ENCODE measurements at regions of chr16 and their contacts with region 1.

Region 1: DNA sequence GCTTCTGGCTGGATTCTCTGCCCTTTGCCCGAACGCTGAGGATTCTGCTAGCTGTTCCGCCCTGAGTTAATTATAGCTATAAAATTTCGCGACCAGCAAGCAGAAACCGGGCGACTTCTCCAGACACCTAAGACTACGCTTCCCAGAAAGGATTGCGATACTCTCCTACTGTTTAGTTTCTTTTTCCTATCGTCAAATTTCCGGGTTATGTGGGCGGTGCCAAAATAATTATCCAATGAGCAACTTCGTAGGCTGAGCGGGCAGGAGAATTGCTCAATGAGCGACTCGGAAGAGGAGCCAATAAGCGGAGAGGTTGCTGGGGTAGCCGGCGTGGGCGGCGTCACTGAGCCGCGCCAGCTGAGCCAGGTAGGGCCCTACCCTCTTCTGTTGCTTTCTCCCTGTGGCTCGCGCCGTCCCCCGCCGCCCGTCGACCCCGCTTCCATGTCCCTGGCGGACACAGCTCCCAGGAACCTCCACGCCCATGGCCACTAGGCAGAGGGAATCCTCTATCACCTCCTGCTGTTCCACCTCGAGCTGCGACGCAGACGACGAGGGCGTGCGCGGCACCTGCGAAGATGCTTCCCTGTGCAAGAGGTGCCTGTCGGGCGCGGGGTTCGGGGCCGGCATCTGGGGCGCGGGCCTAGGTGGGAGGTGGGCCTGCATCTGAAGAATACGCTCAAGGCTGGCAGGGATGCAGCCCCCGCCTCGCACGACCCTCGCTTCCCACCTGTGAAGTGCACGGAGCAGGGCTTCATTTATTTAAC is at the start of gene LCMT1:
- DNase-seq: peak; percentile 95
- total RNA-seq, gene LCMT1: 38.7 TPM

Region 2: DNA sequence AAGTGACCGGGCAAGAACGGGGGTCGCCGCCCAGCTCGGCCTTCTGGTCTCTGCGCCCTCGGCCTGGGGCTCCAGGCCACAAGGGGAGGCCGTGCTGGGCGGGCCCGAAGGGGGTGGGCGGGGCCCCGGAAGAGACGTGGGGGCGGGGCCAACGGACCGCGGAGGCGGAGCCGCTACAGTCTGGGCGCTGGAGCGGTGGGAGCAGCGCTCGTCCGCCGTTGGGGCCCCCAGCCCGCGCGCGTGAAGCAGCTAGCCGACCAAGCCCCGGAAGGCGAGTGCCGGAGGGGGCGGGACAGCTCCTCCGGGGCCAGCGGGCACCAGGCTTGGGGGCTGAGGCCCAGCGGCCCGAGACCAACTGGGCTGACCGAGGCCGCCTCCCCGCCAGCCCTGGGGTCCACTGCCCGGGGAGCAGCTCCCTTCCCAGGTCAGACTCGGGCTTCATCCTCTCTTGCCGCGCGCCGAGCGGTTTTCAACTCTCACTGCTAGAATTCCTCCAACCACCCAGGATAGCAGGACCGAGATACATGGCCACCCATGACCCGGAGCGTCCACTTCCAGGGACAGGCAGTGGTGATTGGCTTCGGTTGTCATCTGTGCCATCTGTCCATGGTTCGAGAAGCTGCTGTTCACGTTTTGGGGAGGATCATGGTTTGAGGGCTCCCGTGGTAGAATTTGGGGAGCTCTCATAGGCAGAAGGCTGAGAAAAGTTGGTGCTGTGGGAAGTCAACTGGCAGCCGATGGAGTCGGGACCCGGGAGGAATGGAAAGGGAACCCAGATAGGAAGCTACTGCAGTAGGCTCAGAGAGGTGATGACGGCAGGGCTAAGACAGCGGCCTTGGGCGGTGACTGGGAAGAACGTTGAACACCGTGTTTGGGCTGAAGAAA is 44.6 kb before region 1 on chr16:
- intact Hi-C with region 1: loop called (anchors 2 kb)
- DNase-seq: peak; percentile 95

Region 3: GRCh38 chr16:25198021-25198420 is 86.4 kb after region 1 on chr16:
- intact Hi-C with region 1: no loop called
- DNase-seq: no peak

Region 4: DNA sequence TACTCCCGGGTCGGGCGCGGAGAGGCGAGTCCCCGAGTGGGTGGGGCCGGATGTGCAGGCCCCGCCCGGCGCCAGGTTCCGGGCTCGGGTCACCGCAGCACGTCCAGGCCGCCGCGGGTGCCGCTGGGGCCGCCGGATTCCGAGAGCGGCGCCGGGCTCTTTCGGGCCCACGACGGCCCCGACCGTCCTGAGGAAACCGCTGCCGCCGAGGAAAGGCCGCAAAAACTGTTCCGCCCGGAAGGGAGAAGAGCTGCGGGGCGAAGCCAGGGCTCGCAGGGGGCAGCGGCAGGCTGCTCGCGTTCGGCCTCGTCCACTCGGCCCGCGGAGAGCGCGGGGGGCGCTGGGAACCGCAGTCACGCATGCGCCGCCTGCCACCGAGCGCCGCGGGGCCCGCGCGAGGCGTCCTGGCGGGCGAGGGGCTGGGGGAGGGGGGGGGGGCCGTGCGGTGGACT is 145.9 kb after region 1 on chr16 and contains the start of gene ZKSCAN2:
- intact Hi-C with region 1: loop called (anchors 5 kb)
- DNase-seq: peak; percentile 96
- total RNA-seq, gene ZKSCAN2: 5.1 TPM

Measured in cardiac septum (tissue), 1 donor.